Endothelial cell of umbilical vein (primary cell): ENCODE measurements at regions of chr10 and their contacts with region 1.

Region 1: DNA sequence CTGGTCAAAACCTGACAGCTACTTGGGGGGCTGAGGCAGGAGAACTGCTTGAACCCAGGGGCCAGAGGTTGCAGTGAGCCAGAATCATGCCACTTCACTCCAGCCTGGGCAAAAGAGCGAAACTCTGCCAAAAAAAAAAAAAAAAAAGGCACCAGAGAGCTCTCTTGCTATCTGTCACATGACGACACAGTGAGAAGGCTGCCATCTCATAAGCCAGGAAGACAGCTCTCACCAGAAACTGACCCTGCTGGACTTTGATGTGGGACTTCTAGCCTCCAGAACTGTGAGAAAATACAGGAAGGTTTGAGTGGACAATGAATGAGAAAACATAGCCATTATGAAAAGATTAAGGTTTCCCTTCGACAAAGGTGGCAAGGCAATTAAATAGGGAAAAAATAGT is 51.1 kb upstream of the KCNIP2 start:
- DNase-seq: no peak
- H3K4me3 ChIP-seq: no peak overlapping the region
- H3K27ac ChIP-seq: no peak overlapping the region
- H3K4me1 ChIP-seq: no peaks in the 10 kb centered on the region
- H3K27me3 ChIP-seq: no peaks in the 10 kb centered on the region
- CTCF ChIP-seq: no peak
- POLR2A ChIP-seq: no peak

Region 2: GRCh38 chr10:101512738-101513137 is 382.0 kb before region 1 on chr10:
- CTCF ChIA-PET with region 1: no interaction called
- POLR2A ChIA-PET with region 1: no interaction called
- dilution Hi-C with region 1: no loop called
- intact Hi-C with region 1: no loop called
- DNase-seq: no peak
- H3K4me3 ChIP-seq: no peak overlapping the region
- H3K27ac ChIP-seq: no peak overlapping the region
- H3K4me1 ChIP-seq: no peaks in the 10 kb centered on the region
- H3K27me3 ChIP-seq: no peaks in the 10 kb centered on the region
- CTCF ChIP-seq: no peak
- POLR2A ChIP-seq: no peak

Region 3: DNA sequence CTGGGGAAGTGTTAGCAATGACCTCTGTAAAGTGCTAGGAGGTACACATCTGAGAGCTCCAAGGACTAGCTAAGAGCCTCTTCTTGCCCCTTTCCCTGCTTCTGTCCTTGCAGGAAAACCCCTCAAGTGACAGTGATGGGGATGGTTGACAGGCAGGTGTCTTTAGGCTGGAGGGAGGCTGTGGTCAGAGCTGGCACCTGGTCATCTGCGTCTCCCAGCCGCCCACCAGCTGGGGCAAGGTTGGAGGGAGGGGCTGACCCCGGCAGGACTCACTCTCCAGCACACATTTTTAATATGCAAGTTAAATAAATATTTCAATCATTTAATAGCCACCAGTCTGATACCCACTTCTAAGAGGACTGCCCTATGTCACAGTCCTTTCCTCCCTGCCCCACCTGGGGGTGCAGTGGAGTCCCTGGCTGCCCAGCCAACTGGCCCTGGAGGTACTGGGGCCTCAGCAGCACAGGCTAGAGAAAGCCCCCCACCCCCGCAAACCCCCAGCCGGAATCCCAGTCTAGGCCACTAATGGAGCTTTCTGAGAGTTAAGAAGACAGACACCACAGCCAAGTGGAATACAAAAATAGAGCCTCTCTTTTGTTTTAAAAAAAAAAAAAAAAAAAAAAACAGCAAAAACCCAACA is 125.1 kb before region 1 on chr10:
- CTCF ChIA-PET with region 1: no interaction called
- POLR2A ChIA-PET with region 1: no interaction called
- dilution Hi-C with region 1: no loop called
- intact Hi-C with region 1: no loop called
- DNase-seq: no peak
- H3K4me3 ChIP-seq: no peak overlapping the region
- H3K27ac ChIP-seq: no peak overlapping the region
- H3K4me1 ChIP-seq: no peaks in the 10 kb centered on the region
- H3K27me3 ChIP-seq: peaks cover 74% of the 10 kb centered on the region in 2 experiments
- CTCF ChIP-seq: no peak
- POLR2A ChIP-seq: no peak

Region 4: GRCh38 chr10:101952191-101952590 is 57.4 kb after region 1 on chr10:
- CTCF ChIA-PET with region 1: interaction called, 8 read pairs
- POLR2A ChIA-PET with region 1: interaction called, 12 read pairs
- dilution Hi-C with region 1: no loop called
- intact Hi-C with region 1: no loop called
- DNase-seq: no peak
- H3K4me3 ChIP-seq: no peak overlapping the region
- H3K27ac ChIP-seq: no peak overlapping the region
- H3K4me1 ChIP-seq: no peaks in the 10 kb centered on the region
- H3K27me3 ChIP-seq: no peaks in the 10 kb centered on the region
- CTCF ChIP-seq: no peak
- POLR2A ChIP-seq: no peak